T-cell (primary cell): ENCODE measurements at regions of chr7 and their contacts with region 1.

Region 1: GRCh38 chr7:30564243-30564892 is 30.3 kb upstream of the GARS1 start:
- DNase-seq: peak; percentile 31 to 86 (median 68)
- ATAC-seq: peak; percentile 83 to 91 (median 89)
- H3K4me3 ChIP-seq: no peak overlapping the region
- H3K4me3 Mint-ChIP-seq: no peak overlapping the region
- H3K27ac ChIP-seq: no peak overlapping the region
- H3K27ac Mint-ChIP-seq: no peak overlapping the region
- H3K4me1 ChIP-seq: no peaks in the 10 kb centered on the region
- H3K4me1 Mint-ChIP-seq: peaks cover 0 to 6% (median 0%) of the 10 kb centered on the region in 3 donors
- H3K27me3 ChIP-seq: no peaks in the 10 kb centered on the region
- H3K27me3 Mint-ChIP-seq: no peaks in the 10 kb centered on the region

Region 2: GRCh38 chr7:30062591-30062990 is 501.8 kb before region 1 on chr7:
- CTCF ChIA-PET with region 1: interaction called, 11 to 16 read pairs
- POLR2A ChIA-PET with region 1: no interaction called
- DNase-seq: peak in 1 of 35 experiments; percentile 44
- ATAC-seq: peak in 3 of 4 experiments; percentile 40 to 63 (median 62)
- H3K4me3 ChIP-seq: no peak overlapping the region
- H3K4me3 Mint-ChIP-seq: no peak overlapping the region
- H3K27ac ChIP-seq: no peak overlapping the region
- H3K27ac Mint-ChIP-seq: no peak overlapping the region
- H3K4me1 ChIP-seq: no peaks in the 10 kb centered on the region
- H3K4me1 Mint-ChIP-seq: peaks cover 0 to 11% (median 5%) of the 10 kb centered on the region in 3 donors
- H3K27me3 ChIP-seq: no peaks in the 10 kb centered on the region
- H3K27me3 Mint-ChIP-seq: no peaks in the 10 kb centered on the region

Region 3: DNA sequence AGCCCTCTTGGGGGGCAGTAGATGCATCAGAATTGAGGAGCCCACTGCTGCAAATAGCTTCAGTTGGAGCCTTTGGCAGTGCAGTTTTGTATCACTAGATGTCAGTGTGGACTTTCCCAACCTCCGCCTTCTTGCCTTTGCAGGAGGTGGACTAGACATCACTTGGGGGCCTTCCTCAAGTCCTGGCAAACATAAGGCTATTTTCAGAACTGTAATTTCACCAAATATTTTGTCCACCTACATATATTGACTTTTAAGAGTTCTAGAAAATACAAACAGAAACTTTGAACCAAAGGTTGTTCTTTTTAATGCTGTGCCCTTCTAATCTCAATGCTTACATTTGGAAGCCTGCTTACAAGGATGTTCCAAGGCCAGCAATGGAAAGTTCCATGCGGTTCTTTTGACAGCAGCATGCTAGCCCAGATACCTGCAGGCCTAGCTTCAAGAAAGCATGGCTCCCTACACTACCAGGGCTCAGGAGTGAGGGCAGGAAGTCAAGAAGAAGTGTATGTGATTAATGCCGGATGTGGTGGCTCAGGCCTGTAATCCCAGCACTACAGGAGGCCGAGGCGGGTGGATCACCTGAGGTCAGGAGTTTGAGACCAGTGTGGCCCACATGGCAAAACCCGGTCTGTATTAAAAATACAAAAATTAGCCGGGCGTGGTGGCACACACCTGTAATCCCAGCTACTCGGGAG is 288.0 kb before region 1 on chr7:
- CTCF ChIA-PET with region 1: interaction called, 14 to 19 read pairs
- POLR2A ChIA-PET with region 1: no interaction called
- DNase-seq: peak in 34 of 35 experiments; percentile 10 to 74 (median 36)
- ATAC-seq: peak; percentile 70 to 86 (median 77)
- H3K4me3 ChIP-seq: no peak overlapping the region
- H3K4me3 Mint-ChIP-seq: no peak overlapping the region
- H3K27ac ChIP-seq: no peak overlapping the region
- H3K27ac Mint-ChIP-seq: peak overlapping the region in 1 of 2 donors; percentile 8
- H3K4me1 ChIP-seq: no peaks in the 10 kb centered on the region
- H3K4me1 Mint-ChIP-seq: peaks cover 6 to 13% (median 8%) of the 10 kb centered on the region in 3 donors
- H3K27me3 ChIP-seq: no peaks in the 10 kb centered on the region
- H3K27me3 Mint-ChIP-seq: no peaks in the 10 kb centered on the region

Region 4: GRCh38 chr7:30548762-30549344 is 15.5 kb before region 1 on chr7:
- CTCF ChIA-PET with region 1: interaction called, 6 to 10 read pairs
- POLR2A ChIA-PET with region 1: interaction called in 1 of 2 experiments, 3 read pairs
- DNase-seq: peak in 16 of 35 experiments; percentile 7 to 58 (median 17)
- ATAC-seq: peak in 1 of 4 experiments; percentile 42
- H3K4me3 ChIP-seq: no peak overlapping the region
- H3K4me3 Mint-ChIP-seq: no peak overlapping the region
- H3K27ac ChIP-seq: no peak overlapping the region
- H3K27ac Mint-ChIP-seq: no peak overlapping the region
- H3K4me1 ChIP-seq: no peaks in the 10 kb centered on the region
- H3K4me1 Mint-ChIP-seq: no peaks in the 10 kb centered on the region
- H3K27me3 ChIP-seq: no peaks in the 10 kb centered on the region
- H3K27me3 Mint-ChIP-seq: no peaks in the 10 kb centered on the region